Activated B cell treated with CpG ODN at 0.5 μM for 24 hours (primary cell): ENCODE measurements at regions of chr21 and their contacts with region 1.

Region 1: DNA sequence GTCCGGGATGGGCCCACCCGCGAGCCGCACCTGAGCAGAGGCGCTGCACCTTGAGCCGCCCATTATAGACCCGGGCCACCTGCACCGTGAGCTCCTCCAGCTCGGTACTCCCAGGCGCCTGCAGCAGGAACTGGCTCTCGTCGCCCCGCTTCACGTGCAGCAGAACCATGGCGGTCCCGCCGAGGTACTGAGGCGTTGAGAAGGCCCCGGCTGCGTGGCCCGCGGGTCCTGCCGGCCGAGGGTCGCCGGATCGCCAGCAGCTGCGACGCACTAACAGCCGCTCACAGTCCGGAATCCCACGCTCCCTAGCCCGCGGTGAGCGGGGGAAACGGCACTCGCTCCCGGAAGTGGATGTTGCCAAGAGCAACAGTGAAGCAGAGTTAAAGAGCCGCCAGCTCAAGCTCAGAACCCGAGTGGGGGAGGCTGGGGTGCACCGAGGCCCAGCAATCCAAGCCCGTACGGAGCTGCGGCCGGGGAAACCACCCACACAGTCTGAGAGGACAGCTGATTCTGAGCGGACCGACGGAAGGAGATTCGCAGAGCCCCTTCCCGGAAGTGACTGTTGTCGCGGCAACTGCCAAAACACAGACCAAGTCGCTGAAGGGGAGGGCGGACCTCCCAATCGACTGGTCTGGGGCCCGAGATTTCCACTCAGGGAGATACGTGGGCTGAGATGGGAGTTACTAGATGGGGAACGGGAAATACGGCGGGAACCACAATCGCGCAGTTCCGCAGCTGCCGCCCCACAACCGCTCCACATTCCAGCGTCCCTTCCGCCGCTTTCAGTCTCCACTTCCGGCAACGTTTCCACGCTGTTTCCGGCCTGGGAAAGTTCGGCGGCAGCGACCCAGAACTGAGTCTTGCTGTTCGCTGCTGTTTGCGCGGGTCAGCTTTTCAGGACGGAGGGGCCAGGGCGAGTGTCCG is at the start of gene CFAP298:
- DNase-seq: peak; percentile 83
- ATAC-seq: peak; percentile 89
- H3K4me3 Mint-ChIP-seq: peak within 1 kb of the TSS; percentile 97
- H3K27ac Mint-ChIP-seq: peak within 1 kb of the TSS; percentile 96
- H3K4me1 Mint-ChIP-seq: peaks cover 12% of the 10 kb centered on the region
- H3K27me3 Mint-ChIP-seq: no peaks in the 10 kb centered on the region
- CTCF ChIP-seq: no peak
- total RNA-seq, gene CFAP298: 36.4 and 37.3 TPM in 2 replicates

Region 2: GRCh38 chr21:31659536-31660258 is 952.6 kb before region 1 on chr21 and contains the start of gene SOD1:
- CTCF ChIA-PET with region 1: no interaction called
- POLR2A ChIA-PET with region 1: no interaction called
- intact Hi-C with region 1: loop called (anchors 1 kb)
- DNase-seq: peak; percentile 93
- ATAC-seq: peak; percentile 97
- H3K4me3 Mint-ChIP-seq: peak within 1 kb of the TSS; percentile 99
- H3K27ac Mint-ChIP-seq: peak within 1 kb of the TSS; percentile 96
- H3K4me1 Mint-ChIP-seq: peaks cover 65% of the 10 kb centered on the region
- H3K27me3 Mint-ChIP-seq: no peaks in the 10 kb centered on the region
- CTCF ChIP-seq: no peak
- total RNA-seq, gene SOD1: 107 and 131 TPM in 2 replicates

Region 3: DNA sequence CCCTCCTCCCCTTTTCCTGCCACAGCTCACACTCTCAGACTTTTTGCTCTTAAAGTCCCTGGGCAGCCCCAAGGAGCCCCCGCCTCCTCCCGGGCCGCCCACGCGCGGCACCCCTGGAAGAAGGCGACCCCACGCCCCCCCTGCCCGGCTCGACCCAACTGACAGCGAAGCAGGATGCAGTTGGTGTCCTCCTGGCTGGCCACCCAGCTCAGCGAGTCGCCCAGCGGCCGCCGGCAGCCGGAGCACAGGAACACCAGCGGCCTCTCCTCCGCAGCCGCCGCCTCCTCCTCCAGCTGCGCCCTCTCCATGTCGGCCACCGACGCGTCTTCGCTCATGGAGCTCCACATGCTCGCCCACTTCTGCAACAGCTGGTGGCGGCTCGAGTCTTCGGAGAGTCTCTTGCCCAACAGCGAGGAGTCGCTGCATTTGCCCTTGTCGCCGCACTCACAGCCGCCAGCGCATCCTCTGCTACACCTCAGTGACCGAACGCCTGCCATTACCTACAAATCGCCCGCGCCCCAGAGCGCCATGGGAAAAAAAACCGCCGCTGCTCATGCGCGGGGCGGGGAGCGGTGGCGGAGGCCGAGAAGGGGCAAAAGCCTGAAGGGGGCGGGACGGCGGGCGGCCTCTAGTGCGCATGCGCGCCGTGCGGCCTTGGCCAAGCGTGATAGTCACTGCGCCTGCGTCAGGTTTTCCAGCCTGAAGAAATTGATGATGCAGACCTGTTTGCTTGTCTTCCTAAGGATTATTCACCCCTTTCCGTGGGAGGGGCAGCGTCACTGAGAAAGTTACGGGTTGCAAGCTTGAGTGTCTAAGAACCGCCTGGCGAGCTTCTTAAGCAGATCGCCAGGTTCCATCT is 333.6 kb before region 1 on chr21 and contains the start of gene MIS18A:
- CTCF ChIA-PET with region 1: no interaction called
- POLR2A ChIA-PET with region 1: no interaction called
- intact Hi-C with region 1: loop called (anchors 1 kb)
- DNase-seq: peak; percentile 96
- ATAC-seq: peak; percentile 96
- H3K4me3 Mint-ChIP-seq: peak within 1 kb of the TSS; percentile 98
- H3K27ac Mint-ChIP-seq: peak within 1 kb of the TSS; percentile 88
- H3K4me1 Mint-ChIP-seq: peaks cover 16% of the 10 kb centered on the region
- H3K27me3 Mint-ChIP-seq: no peaks in the 10 kb centered on the region
- CTCF ChIP-seq: no peak
- total RNA-seq, gene MIS18A: 6.8 and 7.7 TPM in 2 replicates

Region 4: GRCh38 chr21:32448803-32449594 is 163.3 kb before region 1 on chr21:
- CTCF ChIA-PET with region 1: no interaction called
- POLR2A ChIA-PET with region 1: no interaction called
- intact Hi-C with region 1: no loop called
- DNase-seq: no peak
- ATAC-seq: no peak
- H3K4me3 Mint-ChIP-seq: no peak overlapping the region
- H3K27ac Mint-ChIP-seq: no peak overlapping the region
- H3K4me1 Mint-ChIP-seq: no peaks in the 10 kb centered on the region
- H3K27me3 Mint-ChIP-seq: no peaks in the 10 kb centered on the region
- CTCF ChIP-seq: no peak

Region 5: GRCh38 chr21:32494934-32495703 is 117.2 kb before region 1 on chr21:
- CTCF ChIA-PET with region 1: no interaction called
- POLR2A ChIA-PET with region 1: no interaction called
- intact Hi-C with region 1: no loop called
- DNase-seq: no peak
- ATAC-seq: no peak
- H3K4me3 Mint-ChIP-seq: no peak overlapping the region
- H3K27ac Mint-ChIP-seq: no peak overlapping the region
- H3K4me1 Mint-ChIP-seq: no peaks in the 10 kb centered on the region
- H3K27me3 Mint-ChIP-seq: peaks cover 2% of the 10 kb centered on the region
- CTCF ChIP-seq: no peak

Region 6: DNA sequence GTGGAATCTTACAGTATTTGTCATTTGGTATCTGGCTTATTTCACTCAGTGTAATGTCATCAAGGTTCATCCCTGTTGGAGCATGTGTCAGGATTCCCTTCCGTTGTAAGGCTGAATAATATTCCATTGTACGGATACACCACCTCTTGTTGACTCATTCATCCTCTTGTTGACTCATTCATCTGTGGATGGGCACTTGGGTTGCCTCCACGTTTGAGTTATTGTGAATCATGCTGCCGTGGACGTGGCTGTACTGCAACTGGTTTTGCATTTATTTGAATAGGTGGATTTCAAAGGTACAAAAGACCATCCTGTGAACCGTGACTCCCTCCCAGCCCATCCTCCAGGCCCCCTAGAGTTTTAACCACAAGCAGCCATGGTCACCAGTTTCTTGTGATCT is 15.1 kb before region 1 on chr21:
- CTCF ChIA-PET with region 1: interaction called, 10 read pairs
- POLR2A ChIA-PET with region 1: no interaction called
- intact Hi-C with region 1: no loop called
- DNase-seq: no peak
- ATAC-seq: no peak
- H3K4me3 Mint-ChIP-seq: no peak overlapping the region
- H3K27ac Mint-ChIP-seq: no peak overlapping the region
- H3K4me1 Mint-ChIP-seq: peaks cover 7% of the 10 kb centered on the region
- H3K27me3 Mint-ChIP-seq: no peaks in the 10 kb centered on the region
- CTCF ChIP-seq: no peak

Region 7: GRCh38 chr21:32727687-32728455 is 115.5 kb after region 1 on chr21 and contains the start of gene SYNJ1:
- CTCF ChIA-PET with region 1: no interaction called
- POLR2A ChIA-PET with region 1: interaction called, 6 read pairs
- intact Hi-C with region 1: loop called (anchors 1 kb)
- DNase-seq: peak; percentile 94
- ATAC-seq: peak; percentile 91
- H3K4me3 Mint-ChIP-seq: peak within 1 kb of the TSS; percentile 93
- H3K27ac Mint-ChIP-seq: peak within 1 kb of the TSS; percentile 72
- H3K4me1 Mint-ChIP-seq: peaks cover 14% of the 10 kb centered on the region
- H3K27me3 Mint-ChIP-seq: no peaks in the 10 kb centered on the region
- CTCF ChIP-seq: no peak
- total RNA-seq, gene SYNJ1: 5.2 and 5.4 TPM in 2 replicates